ENCODE measurements at regions of chr5 and their contacts with region 1.

Region 1: GRCh38 chr5:42583322-42583721 is 160.1 kb downstream of the GHR start:
- DNase-seq: no peak
- ATAC-seq: peak; percentile 88
- H3K4me3 ChIP-seq: no peak overlapping the region
- H3K27ac ChIP-seq: no peak overlapping the region
- H3K4me1 ChIP-seq: peaks cover 10% of the 10 kb centered on the region
- H3K27me3 ChIP-seq: no peaks in the 10 kb centered on the region
- CTCF ChIP-seq: peak; percentile 85

Region 2: DNA sequence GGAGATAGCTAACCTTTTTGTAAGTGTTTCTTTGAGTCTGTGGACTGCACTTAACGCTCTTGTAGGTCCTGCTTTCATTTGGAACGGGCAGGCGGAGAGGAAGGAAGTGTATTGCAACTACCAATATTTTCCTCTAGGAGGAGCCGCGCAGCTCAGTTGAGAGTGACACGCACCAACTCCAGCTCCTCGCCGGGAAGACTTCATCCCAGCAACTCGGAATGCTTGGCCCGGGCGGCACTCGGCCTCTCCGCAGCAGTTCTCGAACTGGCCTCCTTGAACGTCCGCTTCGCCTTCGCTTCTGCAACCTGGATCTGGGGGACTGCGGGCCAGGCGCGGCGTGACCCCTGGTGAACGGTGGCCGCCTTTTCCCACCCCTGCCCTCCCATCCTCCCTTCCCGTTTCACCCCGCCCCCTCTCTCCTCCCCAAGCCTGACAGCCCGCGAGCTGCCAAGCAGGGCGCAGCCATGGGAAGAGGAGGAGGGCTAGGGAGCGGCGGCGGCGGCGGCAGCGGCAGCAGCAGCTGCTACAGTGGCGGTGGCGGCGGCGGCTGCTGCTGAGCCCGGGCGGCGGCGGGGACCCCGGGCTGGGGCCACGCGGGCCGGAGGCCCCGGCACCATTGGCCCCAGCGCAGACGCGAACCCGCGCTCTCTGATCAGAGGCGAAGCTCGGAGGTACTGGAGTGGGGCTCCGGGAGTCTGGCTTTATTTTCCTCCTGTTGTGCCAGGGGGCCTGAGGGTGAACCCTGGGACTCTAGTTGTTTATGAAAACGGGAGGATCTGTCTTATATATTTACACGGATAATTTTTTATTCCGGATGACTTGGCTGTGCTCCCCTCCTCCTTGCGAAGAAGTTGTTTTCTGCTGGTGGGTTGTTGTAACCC is 159.8 kb before region 1 on chr5 and contains the start of gene GHR:
- intact Hi-C with region 1: loop called (anchors 10 kb)
- DNase-seq: peak; percentile 86
- ATAC-seq: peak; percentile 97
- H3K4me3 ChIP-seq: peak within 1 kb of the TSS; percentile 63
- H3K27ac ChIP-seq: peak within 1 kb of the TSS; percentile 73
- H3K4me1 ChIP-seq: peaks cover 8% of the 10 kb centered on the region
- H3K27me3 ChIP-seq: peaks cover 15% of the 10 kb centered on the region
- CTCF ChIP-seq: peak; percentile 71
- total RNA-seq, gene GHR: 6.6 TPM

Region 3: DNA sequence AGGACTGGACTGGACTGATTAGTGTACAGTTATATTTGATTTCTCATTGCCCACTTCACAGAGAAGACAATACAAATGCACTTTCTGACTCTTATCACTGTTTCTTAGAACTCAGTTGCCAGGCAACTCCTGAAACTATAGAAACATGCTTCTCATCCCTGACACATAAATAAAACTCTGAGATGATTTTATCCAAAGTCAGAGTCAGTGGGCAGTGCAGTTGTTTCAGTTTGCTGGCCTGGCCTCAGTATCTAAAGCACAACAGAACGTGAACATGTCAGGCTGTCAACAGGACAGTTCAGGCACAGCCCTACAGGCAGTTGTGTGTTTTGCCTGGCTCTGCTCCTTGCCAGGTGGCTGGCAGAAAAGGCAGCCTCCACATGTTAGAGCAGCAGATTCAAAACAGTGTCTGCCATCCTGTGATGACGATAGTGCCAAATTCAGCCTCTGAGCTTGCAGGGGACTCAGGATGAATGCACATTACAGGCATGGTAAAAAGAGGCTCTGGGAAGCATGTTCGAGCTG is 108.2 kb after region 1 on chr5:
- intact Hi-C with region 1: no loop called
- DNase-seq: no peak
- ATAC-seq: no peak
- H3K4me3 ChIP-seq: no peak overlapping the region
- H3K27ac ChIP-seq: no peak overlapping the region
- H3K4me1 ChIP-seq: no peaks in the 10 kb centered on the region
- H3K27me3 ChIP-seq: no peaks in the 10 kb centered on the region
- CTCF ChIP-seq: no peak

Region 4: GRCh38 chr5:42870882-42871418 is 287.6 kb after region 1 on chr5:
- intact Hi-C with region 1: no loop called
- DNase-seq: no peak
- ATAC-seq: no peak
- H3K4me3 ChIP-seq: no peak overlapping the region
- H3K27ac ChIP-seq: no peak overlapping the region
- H3K4me1 ChIP-seq: no peaks in the 10 kb centered on the region
- H3K27me3 ChIP-seq: no peaks in the 10 kb centered on the region
- CTCF ChIP-seq: no peak